ENCODE measurements at regions of chr5 and their contacts with region 1.

Region 1: DNA sequence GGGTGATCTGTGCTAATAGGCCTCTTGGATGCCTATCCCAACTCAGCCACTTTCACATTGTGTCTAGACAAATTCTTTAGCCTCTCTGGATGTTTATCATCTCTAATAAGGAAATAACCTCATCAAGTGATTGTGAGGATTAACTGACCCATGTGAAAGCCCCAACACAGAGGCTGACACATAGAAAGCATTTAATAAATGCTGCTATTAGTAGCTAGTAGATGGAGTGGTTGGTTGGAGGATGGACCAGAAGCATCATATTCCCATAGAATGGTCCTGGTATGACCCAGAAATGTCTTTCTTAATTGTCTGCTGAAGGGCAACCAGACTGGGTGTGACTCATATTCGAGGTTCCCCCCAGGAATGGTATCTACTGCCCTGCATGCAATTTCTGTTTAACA is 124.4 kb downstream of the PIK3R1 start:
- DNase-seq: no peak
- ATAC-seq: no peak
- H3K4me3 ChIP-seq: no peak overlapping the region
- H3K27ac ChIP-seq: no peak overlapping the region
- H3K4me1 ChIP-seq: peaks cover 1% of the 10 kb centered on the region; the same call in 1 of the 2 replicates
- H3K27me3 ChIP-seq: no peaks in the 10 kb centered on the region; the same call in 1 of the 2 replicates
- CTCF ChIP-seq: no peak
- POLR2A ChIP-seq: no peak
- RAD21 ChIP-seq: no peak

Region 2: DNA sequence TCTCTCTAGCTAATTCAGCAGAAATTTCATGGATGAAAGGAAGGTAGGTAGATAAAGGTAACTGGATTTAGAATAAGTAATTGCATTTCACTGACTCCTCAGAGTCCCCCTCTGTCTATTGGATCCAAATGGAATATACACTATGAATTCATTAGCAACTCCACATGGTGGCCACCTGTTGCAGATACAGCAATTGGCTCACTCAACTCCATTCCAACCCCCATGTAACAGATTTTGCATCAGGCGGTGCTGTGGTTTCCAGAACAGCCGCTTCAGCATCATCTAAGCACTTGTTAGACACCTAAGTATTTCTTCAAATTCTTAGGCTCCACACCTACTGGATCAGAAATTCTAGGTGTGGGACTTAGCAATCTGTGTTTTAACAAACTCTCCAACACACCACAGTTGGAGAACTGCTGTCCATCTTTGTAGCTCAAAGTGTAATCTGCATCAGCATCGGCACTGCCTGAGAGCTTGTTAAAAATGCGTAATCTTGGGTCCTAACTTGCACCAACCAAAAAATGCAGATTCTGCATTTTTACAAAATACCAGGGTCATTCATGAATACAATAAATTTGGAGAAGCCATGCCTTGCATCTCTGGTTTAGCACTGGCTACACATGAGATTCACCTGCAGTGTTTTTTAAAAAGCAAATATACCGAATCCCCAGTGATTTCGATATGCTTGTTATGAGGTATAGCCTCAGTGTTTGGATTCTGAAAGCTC is 729.6 kb before region 1 on chr5:
- CTCF ChIA-PET with region 1: no interaction called
- POLR2A ChIA-PET with region 1: no interaction called
- dilution Hi-C with region 1: no loop called
- in situ Hi-C with region 1: no loop called
- intact Hi-C with region 1: no loop called
- DNase-seq: no peak
- ATAC-seq: no peak
- H3K4me3 ChIP-seq: no peak overlapping the region
- H3K27ac ChIP-seq: no peak overlapping the region
- H3K4me1 ChIP-seq: no peaks in the 10 kb centered on the region
- H3K27me3 ChIP-seq: no peaks in the 10 kb centered on the region
- CTCF ChIP-seq: no peak
- POLR2A ChIP-seq: no peak
- RAD21 ChIP-seq: no peak

Region 3: GRCh38 chr5:67957374-67957773 is 382.5 kb before region 1 on chr5:
- CTCF ChIA-PET with region 1: no interaction called
- POLR2A ChIA-PET with region 1: no interaction called
- dilution Hi-C with region 1: no loop called
- in situ Hi-C with region 1: no loop called
- intact Hi-C with region 1: no loop called
- DNase-seq: no peak
- ATAC-seq: no peak
- H3K4me3 ChIP-seq: no peak overlapping the region
- H3K27ac ChIP-seq: no peak overlapping the region
- H3K4me1 ChIP-seq: no peaks in the 10 kb centered on the region
- H3K27me3 ChIP-seq: no peaks in the 10 kb centered on the region; the same call in 1 of the 2 replicates
- CTCF ChIP-seq: no peak
- POLR2A ChIP-seq: no peak
- RAD21 ChIP-seq: no peak

Region 4: DNA sequence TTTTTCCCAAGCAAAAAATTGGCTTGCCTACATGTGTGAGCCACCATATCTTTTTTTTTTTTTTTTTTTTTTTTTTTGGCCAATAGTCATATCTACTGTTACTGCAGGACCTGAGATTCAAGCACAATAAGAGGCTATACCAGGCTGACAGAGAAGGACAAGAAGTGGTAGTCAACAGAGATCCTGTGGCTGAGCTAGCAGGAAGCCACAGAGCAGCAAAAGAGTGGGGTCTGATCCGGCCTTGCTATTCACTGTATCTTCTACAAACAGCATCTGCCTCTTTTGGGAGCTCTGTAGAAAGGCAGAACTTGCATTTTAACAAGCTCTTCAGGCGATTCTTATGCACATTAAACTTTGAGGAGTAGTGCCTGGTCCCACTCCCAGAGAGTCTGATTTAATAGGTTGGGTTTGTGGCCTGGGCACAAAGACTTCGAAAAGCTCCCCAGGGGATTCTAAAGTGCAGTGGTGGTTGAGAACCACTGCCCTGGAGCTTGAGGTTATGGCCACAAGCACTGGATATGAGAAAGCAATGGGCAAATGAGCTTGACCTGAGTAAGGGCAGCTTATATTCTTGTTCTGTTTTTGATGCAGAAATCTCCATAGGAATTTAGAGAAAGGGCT is 38.4 kb after region 1 on chr5:
- CTCF ChIA-PET with region 1: no interaction called
- POLR2A ChIA-PET with region 1: no interaction called
- dilution Hi-C with region 1: no loop called
- in situ Hi-C with region 1: no loop called
- intact Hi-C with region 1: loop called (anchors 5 kb)
- DNase-seq: no peak
- ATAC-seq: no peak
- H3K4me3 ChIP-seq: no peak overlapping the region
- H3K27ac ChIP-seq: no peak overlapping the region
- H3K4me1 ChIP-seq: no peaks in the 10 kb centered on the region
- H3K27me3 ChIP-seq: no peaks in the 10 kb centered on the region
- CTCF ChIP-seq: no peak
- POLR2A ChIP-seq: no peak
- RAD21 ChIP-seq: no peak

Measured in IMR-90 (cell line).